Ascending aorta (tissue), 2 donors: ENCODE measurements at regions of chr5 and their contacts with region 1.

Region 1: DNA sequence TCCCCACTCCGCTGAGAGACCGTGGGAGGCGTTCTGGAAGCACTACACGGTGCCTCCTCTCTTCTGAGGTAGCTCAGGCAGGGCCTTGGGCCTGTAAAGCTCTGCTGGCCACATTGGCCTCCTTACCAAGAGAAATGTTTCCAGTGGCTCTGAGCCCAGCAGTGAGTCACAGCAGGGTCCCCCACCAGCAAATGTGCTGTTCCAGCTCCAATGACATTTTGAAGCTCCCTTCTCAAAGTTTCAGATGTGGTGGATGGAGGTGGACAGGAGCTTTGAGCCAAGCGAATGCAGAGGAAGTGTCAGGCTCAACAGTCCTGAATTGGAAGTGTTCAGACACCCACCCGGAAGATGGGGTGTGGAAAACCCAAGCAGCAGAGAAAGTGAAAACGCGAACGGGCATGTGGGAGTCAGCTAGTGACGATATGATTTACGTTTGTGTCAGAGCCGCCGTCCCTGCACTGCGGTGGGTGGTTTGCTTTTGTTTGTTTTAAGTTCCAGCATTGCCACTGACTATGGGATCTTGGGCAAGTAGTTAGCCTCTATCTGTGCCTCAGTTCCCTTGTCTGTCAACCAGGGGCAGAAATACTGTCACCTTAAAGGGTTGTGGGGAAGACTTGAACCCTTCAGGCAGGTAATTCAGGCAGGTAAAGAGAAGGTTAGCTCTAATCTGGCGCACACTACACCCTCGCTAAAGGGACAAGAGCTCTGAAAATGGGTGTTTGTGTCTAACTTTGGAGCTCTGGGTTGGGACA is 38.2 kb downstream of the C5orf15 start:
- DNase-seq: peak; percentile 19 to 84
- H3K4me3 ChIP-seq: peak overlapping the region in 1 of 2 donors; percentile 44
- H3K27ac ChIP-seq: peak overlapping the region; percentile 45 to 60
- H3K4me1 ChIP-seq: peaks cover 4 to 30% of the 10 kb centered on the region in 2 donors
- H3K27me3 ChIP-seq: no peaks in the 10 kb centered on the region
- CTCF ChIP-seq: no peak

Region 2: DNA sequence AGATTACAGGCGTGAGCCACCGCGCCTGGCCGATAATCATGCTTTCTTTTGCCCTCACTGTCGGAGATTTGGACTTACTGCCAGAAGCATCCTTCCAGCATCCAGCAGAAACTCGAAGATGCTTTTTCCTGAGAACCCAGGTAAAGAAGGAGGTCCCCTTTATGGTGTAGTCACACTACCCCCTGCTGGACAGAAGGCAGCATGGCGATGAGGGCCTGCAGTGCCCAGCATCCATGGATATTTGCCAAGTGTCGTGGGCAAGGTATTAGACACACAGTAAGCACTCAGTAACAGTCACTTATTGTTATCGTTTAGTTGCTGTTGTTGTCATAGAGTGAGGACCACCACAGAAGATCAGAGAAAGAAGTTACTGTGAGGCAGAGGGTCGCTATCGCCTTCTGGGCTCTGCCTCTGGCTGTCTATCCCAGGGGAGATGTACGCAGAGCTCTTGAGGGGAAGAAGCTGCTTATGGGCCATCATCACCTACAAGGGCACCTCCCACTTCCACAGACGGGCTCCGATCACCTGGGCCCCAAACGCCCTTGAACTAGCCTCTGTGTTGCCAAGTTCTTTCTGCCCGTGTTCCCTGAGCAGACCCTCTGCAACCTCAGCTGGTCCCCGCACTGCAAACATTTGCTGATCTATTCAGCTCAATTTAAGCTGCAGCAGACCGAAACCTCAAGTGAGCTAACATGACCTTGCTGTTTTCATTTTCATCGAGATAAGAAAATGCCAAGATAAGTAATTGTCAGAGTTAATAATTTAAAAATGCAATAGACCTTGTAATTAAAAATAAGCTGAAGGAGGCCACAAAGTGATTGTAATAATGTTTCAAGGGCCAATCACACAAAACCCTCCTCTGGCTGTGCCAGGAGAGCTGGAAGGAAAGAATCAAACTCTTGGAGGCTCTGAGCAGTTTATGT is 14.3 kb after region 1 on chr5:
- intact Hi-C with region 1: loop called (anchors 2 kb)
- DNase-seq: peak in 1 of 2 donors; percentile 75
- H3K4me3 ChIP-seq: no peak overlapping the region
- H3K27ac ChIP-seq: no peak overlapping the region
- H3K4me1 ChIP-seq: peaks cover 14 to 19% of the 10 kb centered on the region in 2 donors
- H3K27me3 ChIP-seq: no peaks in the 10 kb centered on the region
- CTCF ChIP-seq: peak; percentile 53 to 63 (median 55)

Region 3: DNA sequence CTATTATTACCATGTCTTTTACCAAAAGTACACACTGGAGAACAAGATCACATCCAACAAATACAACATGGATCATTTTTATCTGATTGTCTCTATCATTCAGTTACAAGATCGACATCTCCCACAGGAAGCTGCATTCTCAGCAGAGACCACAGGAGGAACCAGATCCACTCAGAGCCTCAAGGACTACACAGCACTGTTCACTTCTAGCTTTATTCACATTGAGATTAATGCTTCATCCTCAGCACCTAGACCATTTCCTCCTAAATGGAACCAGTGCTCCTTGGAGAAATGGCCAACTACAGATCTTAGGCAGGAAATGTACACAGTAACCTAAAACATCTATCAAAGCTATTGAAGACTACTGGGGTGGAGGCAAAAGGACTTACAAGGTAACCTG is 51.5 kb after region 1 on chr5:
- intact Hi-C with region 1: no loop called
- DNase-seq: no peak
- H3K4me3 ChIP-seq: no peak overlapping the region
- H3K27ac ChIP-seq: no peak overlapping the region
- H3K4me1 ChIP-seq: no peaks in the 10 kb centered on the region
- H3K27me3 ChIP-seq: no peaks in the 10 kb centered on the region
- CTCF ChIP-seq: no peak